PC-3 (cell line): ENCODE measurements at regions of chr3 and their contacts with region 1.

Region 1: DNA sequence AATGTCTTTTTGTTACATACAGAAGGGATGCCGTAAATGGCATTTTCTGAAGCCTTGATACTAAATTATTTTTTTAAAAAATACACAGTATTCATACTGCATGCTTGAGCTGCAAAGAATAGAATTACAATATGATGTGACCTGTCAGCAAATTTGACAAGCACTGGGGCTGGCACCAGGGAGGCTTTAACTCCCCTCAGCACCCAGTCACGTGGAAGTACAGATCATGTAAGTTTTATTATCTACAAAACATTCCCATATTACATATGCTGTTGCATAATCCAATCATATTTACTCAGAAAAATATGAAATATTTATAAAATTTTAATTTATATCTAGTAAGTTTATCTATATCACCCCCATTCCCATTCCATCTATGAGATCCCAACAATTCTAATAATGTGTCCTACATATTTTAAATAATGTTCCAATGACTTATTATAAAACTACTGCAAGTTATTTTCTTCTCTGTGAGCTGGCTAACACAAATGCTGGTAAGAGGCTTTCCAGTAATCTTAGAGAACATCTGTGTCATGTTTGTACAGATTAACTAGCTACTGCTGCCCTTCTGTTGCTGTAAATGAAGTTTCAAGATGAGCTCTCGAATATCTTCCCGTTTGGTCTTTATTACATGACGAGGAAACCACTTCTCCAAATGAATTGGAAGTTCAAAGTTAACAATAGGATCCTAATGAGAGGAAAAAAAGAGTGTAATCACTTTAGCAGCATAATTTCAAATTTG is 5.2 kb upstream of the IMPG2 start:
- DNase-seq: no peak
- ATAC-seq: no peak
- H3K4me3 ChIP-seq: no peak overlapping the region
- H3K27ac ChIP-seq: no peak overlapping the region
- H3K4me1 ChIP-seq: no peaks in the 10 kb centered on the region
- H3K27me3 ChIP-seq: no peaks in the 10 kb centered on the region
- CTCF ChIP-seq: no peak

Region 2: DNA sequence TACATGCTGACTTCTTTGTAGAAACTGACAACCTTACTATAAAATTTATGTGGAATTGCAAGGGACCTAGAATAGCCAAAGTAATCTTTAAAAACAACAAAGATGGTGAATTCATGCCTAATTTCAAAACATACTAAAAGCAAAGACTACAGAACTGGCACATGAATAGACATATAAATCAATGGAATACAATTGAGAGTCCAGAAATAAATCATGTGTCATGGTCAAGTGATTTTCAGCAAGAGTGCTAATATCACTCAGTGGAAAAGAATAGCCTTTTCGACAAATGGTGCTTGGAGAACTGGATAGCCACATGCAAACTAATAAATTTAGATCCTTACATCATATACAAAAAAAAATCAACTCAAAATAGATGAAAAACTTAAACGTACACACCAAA is 13.9 kb before region 1 on chr3:
- CTCF ChIA-PET with region 1: interaction called, 3 read pairs
- POLR2A ChIA-PET with region 1: interaction called, 9 read pairs
- intact Hi-C with region 1: loop called (anchors 1 kb)
- DNase-seq: no peak
- ATAC-seq: no peak
- H3K4me3 ChIP-seq: no peak overlapping the region
- H3K27ac ChIP-seq: no peak overlapping the region
- H3K4me1 ChIP-seq: peaks cover 14% of the 10 kb centered on the region
- H3K27me3 ChIP-seq: no peaks in the 10 kb centered on the region
- CTCF ChIP-seq: no peak

Region 3: DNA sequence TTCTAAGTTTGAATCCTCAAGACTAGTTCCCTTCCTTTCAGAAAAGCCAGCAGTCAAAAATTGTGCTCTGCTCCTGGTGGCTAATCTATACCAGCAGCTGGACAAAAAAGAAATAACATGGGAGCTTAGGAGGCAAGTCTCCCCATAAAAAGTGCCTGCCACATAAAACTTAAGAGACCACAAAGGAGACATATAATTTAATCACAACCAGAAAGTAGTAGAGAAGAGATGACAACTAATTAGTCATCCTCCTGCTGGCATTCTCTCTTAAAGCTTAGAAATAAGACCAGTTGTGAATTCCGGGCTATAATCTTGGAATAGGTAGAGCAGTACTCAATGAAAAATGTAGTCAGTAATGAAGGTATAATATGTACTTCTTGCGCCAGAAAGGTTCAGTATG is 15.0 kb after region 1 on chr3:
- CTCF ChIA-PET with region 1: no interaction called
- POLR2A ChIA-PET with region 1: no interaction called
- intact Hi-C with region 1: loop called (anchors 2 kb)
- DNase-seq: peak; percentile 68
- ATAC-seq: peak; percentile 96
- H3K4me3 ChIP-seq: no peak overlapping the region
- H3K27ac ChIP-seq: no peak overlapping the region
- H3K4me1 ChIP-seq: peaks cover 11% of the 10 kb centered on the region
- H3K27me3 ChIP-seq: no peaks in the 10 kb centered on the region
- CTCF ChIP-seq: no peak